ENCODE measurements at regions of chr22 and their contacts with region 1.

Region 1: DNA sequence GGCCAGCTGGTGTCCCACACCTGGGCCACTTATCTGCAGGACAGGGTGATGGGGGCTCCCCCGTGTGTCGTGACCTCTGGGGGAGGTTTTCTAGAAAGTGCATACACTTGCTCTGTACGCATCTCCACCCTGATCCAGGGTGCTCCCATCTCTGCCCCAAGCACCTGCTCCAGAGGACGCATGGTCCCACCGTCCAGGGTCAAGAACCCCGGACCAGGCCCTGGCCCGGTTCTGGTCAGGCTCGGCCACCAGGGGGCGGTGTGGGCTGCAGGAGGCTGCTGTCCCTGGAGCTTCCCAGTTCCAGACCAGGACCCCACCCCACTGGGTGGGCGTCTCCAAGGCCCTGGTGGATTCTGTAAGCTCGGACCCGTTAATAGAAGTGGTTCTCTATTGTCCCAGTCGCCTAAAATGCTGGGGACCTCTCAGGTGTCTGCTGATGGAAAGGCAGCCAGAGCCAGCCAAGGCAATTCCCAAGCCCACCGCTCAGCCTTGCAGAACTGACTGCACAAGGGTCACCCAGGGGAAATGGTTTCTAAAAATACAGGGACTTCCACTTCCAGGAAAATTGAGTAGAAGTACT is 34.7 kb upstream of the SEPTIN5 start:
- DNase-seq: no peak
- H3K4me3 ChIP-seq: no peak overlapping the region
- CTCF ChIP-seq: peak; percentile 62

Region 2: GRCh38 chr22:19568337-19569275 is 111.0 kb before region 1 on chr22:
- CTCF ChIA-PET with region 1: no interaction called
- POLR2A ChIA-PET with region 1: no interaction called
- DNase-seq: peak; percentile 64
- H3K4me3 ChIP-seq: no peak overlapping the region
- CTCF ChIP-seq: no peak

Region 3: GRCh38 chr22:19669570-19669969 is 10.0 kb before region 1 on chr22:
- CTCF ChIA-PET with region 1: interaction called, 15 read pairs
- POLR2A ChIA-PET with region 1: no interaction called
- DNase-seq: no peak
- H3K4me3 ChIP-seq: no peak overlapping the region
- CTCF ChIP-seq: no peak

Region 4: DNA sequence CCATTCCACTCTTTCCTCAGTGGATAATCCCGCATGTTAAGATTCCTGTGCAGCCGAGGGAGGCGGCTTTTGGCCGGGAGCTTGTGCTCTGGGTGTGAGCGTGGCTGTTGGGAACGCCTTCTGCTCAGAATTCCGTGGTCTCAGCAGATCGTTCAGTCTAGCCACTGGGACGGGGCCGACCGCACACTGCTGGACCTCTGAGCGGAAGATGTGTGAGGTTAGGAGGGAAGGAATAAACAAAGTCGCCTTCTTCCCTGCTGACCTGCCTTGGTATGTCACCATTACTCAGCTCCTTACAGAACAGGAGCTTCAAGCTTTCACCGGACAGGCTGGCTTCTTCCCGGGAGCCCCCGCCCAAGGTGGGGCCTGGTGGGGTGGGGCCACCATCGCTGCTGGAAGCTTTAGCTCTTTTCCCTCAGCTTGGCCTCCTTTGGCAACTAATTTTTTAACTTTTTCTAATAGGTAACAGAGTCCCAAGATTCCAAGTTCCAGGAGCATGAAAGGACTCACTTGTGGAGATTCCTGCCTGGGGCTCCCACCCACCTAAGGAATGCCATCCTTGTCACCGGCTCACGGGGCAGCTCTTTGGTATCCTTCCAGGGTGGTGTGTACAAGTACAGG is 12.2 kb after region 1 on chr22:
- CTCF ChIA-PET with region 1: interaction called, 39 read pairs
- POLR2A ChIA-PET with region 1: no interaction called
- DNase-seq: no peak
- H3K4me3 ChIP-seq: no peak overlapping the region
- CTCF ChIP-seq: no peak